B cell (primary cell): ENCODE measurements at regions of chr14 and their contacts with region 1.

Region 1: GRCh38 chr14:55160989-55161388 is 30.4 kb downstream of the DLGAP5 start:
- DNase-seq: peak; percentile 60
- ATAC-seq: peak; percentile 85
- H3K4me3 ChIP-seq: no peak overlapping the region
- H3K4me3 Mint-ChIP-seq: no peak overlapping the region
- H3K27ac ChIP-seq: no peak overlapping the region
- H3K27ac Mint-ChIP-seq: no peak overlapping the region
- H3K4me1 ChIP-seq: no peaks in the 10 kb centered on the region
- H3K4me1 Mint-ChIP-seq: peaks cover 2% of the 10 kb centered on the region
- H3K27me3 ChIP-seq: no peaks in the 10 kb centered on the region
- H3K27me3 Mint-ChIP-seq: no peaks in the 10 kb centered on the region
- CTCF ChIP-seq: peak; percentile 74

Region 2: DNA sequence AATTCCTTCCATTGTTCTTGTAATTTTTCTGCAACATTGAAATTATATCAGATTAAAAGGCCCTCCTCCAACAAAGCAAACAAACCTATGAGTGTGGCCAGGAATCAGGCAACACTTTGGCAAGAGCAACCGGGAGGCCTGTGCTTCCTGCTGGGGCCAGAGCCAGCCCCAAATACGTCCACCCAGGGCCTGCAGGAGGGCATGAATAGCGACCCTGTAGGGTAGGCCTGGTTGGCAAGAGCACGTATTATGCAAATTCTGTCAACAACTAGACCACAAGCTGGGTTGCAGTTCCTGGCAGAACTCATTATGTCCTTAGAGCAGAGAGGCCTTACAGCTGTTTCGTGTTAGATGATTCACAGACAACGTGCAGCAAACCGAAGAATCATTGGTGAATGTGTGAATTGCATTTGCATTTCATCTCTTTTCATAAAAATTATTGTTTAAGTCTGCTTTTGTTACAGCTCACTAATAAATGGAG is 58.8 kb before region 1 on chr14:
- CTCF ChIA-PET with region 1: interaction called, 16 read pairs
- POLR2A ChIA-PET with region 1: no interaction called
- intact Hi-C with region 1: no loop called
- DNase-seq: peak; percentile 73
- ATAC-seq: peak; percentile 89
- H3K4me3 ChIP-seq: no peak overlapping the region
- H3K4me3 Mint-ChIP-seq: peak overlapping the region; percentile 70
- H3K27ac ChIP-seq: no peak overlapping the region
- H3K27ac Mint-ChIP-seq: peak overlapping the region; percentile 84
- H3K4me1 ChIP-seq: peaks cover 34 to 47% of the 10 kb centered on the region in 2 donors
- H3K4me1 Mint-ChIP-seq: peaks cover 44% of the 10 kb centered on the region
- H3K27me3 ChIP-seq: no peaks in the 10 kb centered on the region
- H3K27me3 Mint-ChIP-seq: no peaks in the 10 kb centered on the region
- CTCF ChIP-seq: no peak